ENCODE measurements at regions of chr3 and their contacts with region 1.

Region 1: DNA sequence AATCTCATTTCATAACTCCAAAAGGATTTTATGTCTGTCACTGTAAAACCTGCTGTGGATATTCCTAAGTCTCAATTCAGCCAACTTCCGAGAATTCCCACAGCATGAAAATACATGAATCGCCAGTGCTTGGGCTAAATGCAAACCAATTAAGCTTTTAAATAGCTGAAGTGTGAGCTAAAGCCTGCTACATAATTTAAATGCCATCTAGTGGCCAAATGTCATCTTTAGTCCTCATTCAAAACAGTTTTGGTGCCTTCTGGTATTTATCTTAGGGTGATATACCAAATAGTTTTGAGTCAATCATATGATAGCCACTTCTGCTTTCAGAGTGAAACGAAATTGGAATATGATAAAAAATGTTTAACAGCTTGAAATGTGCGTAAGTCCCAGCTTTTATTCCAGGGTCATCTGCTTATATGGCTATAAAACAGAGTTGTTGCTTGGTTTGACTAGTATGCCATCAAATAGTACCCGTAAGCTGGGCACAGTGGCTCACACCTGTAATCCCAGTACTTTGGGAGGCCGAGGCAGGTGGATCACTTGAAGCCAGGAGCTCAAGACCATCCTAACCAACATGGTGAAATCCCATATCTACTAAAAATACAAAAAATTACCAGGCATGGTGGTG is 41.8 kb upstream of the CCNL1 start:
- DNase-seq: peak; percentile 72
- H3K4me3 ChIP-seq: no peak overlapping the region
- H3K27ac ChIP-seq: no peak overlapping the region
- H3K4me1 ChIP-seq: peaks cover 6% of the 10 kb centered on the region
- H3K27me3 ChIP-seq: no peaks in the 10 kb centered on the region
- CTCF ChIP-seq: peak; percentile 69

Region 2: GRCh38 chr3:155995525-155996351 is 1206.0 kb before region 1 on chr3:
- CTCF ChIA-PET with region 1: no interaction called
- POLR2A ChIA-PET with region 1: no interaction called
- intact Hi-C with region 1: loop called (anchors 5 kb)
- DNase-seq: peak; percentile 65
- H3K4me3 ChIP-seq: no peak overlapping the region
- H3K27ac ChIP-seq: no peak overlapping the region
- H3K4me1 ChIP-seq: no peaks in the 10 kb centered on the region
- H3K27me3 ChIP-seq: no peaks in the 10 kb centered on the region
- CTCF ChIP-seq: peak; percentile 69

Region 3: DNA sequence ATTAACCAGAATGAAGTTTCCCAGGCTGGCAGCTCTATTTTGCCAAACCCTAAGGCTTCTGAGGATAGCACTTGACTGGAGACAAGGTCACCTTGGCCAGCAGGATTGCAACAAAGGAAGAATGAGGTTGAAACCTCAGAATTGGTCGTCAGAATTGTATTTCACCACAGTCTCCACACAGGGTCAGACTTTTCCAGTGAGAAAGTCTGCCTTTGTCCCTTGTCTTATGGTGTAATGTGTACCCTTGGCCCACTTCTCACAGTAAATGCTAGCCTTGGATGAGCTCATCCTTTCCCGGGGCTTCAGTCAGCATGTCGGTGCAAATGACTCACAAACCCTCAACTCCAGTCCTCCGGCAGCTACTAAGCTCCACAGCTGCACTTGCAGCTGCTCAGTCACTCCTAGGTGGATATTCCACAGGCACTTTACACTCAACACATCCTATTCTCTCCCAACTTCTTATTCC is 666.6 kb before region 1 on chr3:
- CTCF ChIA-PET with region 1: no interaction called
- POLR2A ChIA-PET with region 1: no interaction called
- intact Hi-C with region 1: no loop called
- DNase-seq: peak; percentile 92
- H3K4me3 ChIP-seq: no peak overlapping the region
- H3K27ac ChIP-seq: peak overlapping the region; percentile 48
- H3K4me1 ChIP-seq: peaks cover 48% of the 10 kb centered on the region
- H3K27me3 ChIP-seq: no peaks in the 10 kb centered on the region
- CTCF ChIP-seq: peak; percentile 33; the same call in 1 of the 2 replicates

Region 4: DNA sequence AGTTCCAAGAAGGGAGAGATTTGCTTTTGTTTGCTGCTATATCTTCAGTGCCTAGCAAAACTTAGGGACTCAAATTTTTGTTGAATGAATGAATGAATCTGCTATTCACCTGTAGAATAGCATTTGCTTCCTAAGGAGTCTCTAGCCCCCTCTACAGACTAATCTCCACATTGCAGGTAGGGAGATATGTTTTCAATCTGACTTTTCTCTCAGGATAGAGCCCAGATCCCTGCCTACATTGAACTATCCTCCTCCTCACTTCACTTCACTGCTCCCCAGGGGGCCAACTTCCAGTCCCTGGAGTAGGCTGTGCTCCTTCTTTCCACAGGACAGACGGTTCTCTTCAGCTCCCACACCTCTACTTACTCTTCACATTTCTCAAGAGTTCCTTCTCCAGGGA is 153.0 kb after region 1 on chr3:
- CTCF ChIA-PET with region 1: no interaction called
- POLR2A ChIA-PET with region 1: no interaction called
- intact Hi-C with region 1: loop called (anchors 5 kb)
- DNase-seq: peak; percentile 65
- H3K4me3 ChIP-seq: no peak overlapping the region
- H3K27ac ChIP-seq: no peak overlapping the region
- H3K4me1 ChIP-seq: no peaks in the 10 kb centered on the region
- H3K27me3 ChIP-seq: no peaks in the 10 kb centered on the region
- CTCF ChIP-seq: peak; percentile 78

Region 5: GRCh38 chr3:157447026-157447694 is 245.4 kb after region 1 on chr3:
- CTCF ChIA-PET with region 1: interaction called, 3 read pairs
- POLR2A ChIA-PET with region 1: no interaction called
- intact Hi-C with region 1: loop called (anchors 5 kb)
- DNase-seq: peak; percentile 66
- H3K4me3 ChIP-seq: no peak overlapping the region
- H3K27ac ChIP-seq: no peak overlapping the region
- H3K4me1 ChIP-seq: peaks cover 15% of the 10 kb centered on the region
- H3K27me3 ChIP-seq: no peaks in the 10 kb centered on the region
- CTCF ChIP-seq: peak; percentile 71

Region 6: GRCh38 chr3:157493627-157494550 is 292.1 kb after region 1 on chr3:
- CTCF ChIA-PET with region 1: interaction called, 4 read pairs
- POLR2A ChIA-PET with region 1: no interaction called
- intact Hi-C with region 1: loop called (anchors 1 kb)
- DNase-seq: peak; percentile 70
- H3K4me3 ChIP-seq: no peak overlapping the region
- H3K27ac ChIP-seq: no peak overlapping the region
- H3K4me1 ChIP-seq: no peaks in the 10 kb centered on the region
- H3K27me3 ChIP-seq: peaks cover 6% of the 10 kb centered on the region
- CTCF ChIP-seq: peak; percentile 71

Region 7: DNA sequence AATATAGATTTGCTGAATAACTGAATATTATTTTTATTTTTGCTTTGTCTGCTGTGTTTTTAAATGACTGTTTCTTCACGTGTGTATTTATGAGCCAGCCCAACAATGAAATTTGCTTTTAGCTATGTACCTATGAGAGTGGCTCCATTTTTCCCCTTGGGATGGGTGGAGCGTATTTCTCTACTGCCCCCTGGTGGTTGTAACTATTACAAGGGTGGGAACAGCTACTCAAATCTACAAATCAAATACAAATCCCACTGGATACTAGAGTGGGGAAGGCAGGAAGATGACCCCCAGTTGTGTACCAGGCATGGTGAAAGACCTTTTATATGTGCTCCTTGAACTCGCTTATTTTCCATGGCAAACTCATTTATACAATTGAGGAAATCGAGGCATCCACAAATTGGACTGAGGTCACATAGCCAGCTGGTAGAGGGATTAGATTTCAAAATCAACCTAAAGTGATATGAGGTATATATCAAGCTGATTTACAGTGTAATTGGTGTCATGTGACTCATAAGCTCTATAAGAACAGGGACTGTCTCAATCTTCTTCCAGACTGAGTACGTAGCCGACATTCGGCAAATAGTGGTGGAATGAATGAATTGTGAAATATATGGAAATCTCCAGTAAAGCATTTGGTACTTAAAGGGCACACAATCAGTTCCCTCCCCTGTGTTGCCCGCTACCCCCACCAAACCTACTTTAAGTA is 371.0 kb after region 1 on chr3:
- CTCF ChIA-PET with region 1: interaction called, 11 read pairs
- POLR2A ChIA-PET with region 1: no interaction called
- intact Hi-C with region 1: loop called (anchors 1 kb)
- DNase-seq: peak; percentile 71
- H3K4me3 ChIP-seq: no peak overlapping the region
- H3K27ac ChIP-seq: no peak overlapping the region
- H3K4me1 ChIP-seq: no peaks in the 10 kb centered on the region
- H3K27me3 ChIP-seq: peaks cover 12% of the 10 kb centered on the region
- CTCF ChIP-seq: peak; percentile 82